K562 (cell line): ENCODE measurements at regions of chr1 and their contacts with region 1.

Region 1: GRCh38 chr1:222009105-222009730 is 267.3 kb upstream of the DUSP10 start:
- DNase-seq: peak; percentile 23 to 61 (median 30)
- ATAC-seq: peak; percentile 95
- H3K4me3 ChIP-seq: no peak overlapping the region
- H3K27ac ChIP-seq: no peak overlapping the region
- H3K4me1 ChIP-seq: no peaks in the 10 kb centered on the region
- H3K27me3 ChIP-seq: no peaks in the 10 kb centered on the region
- CTCF ChIP-seq: peak; percentile 38 to 61 (median 46); a peak in 4 of 6 replicates
- EP300 ChIP-seq: no peak
- POLR2A ChIP-seq: no peak
- RAD21 ChIP-seq: peak; percentile 73 to 86

Region 2: GRCh38 chr1:221916176-221916575 is 93.0 kb before region 1 on chr1:
- CTCF ChIA-PET with region 1: no interaction called
- POLR2A ChIA-PET with region 1: no interaction called
- in situ Hi-C with region 1: no loop called
- intact Hi-C with region 1: loop called (anchors 5 kb)
- DNase-seq: no peak
- ATAC-seq: no peak
- H3K4me3 ChIP-seq: no peak overlapping the region
- H3K27ac ChIP-seq: no peak overlapping the region
- H3K4me1 ChIP-seq: no peaks in the 10 kb centered on the region
- H3K27me3 ChIP-seq: no peaks in the 10 kb centered on the region
- CTCF ChIP-seq: no peak
- EP300 ChIP-seq: no peak
- POLR2A ChIP-seq: no peak
- RAD21 ChIP-seq: no peak